ENCODE measurements at regions of chr10 and their contacts with region 1.

Region 1: DNA sequence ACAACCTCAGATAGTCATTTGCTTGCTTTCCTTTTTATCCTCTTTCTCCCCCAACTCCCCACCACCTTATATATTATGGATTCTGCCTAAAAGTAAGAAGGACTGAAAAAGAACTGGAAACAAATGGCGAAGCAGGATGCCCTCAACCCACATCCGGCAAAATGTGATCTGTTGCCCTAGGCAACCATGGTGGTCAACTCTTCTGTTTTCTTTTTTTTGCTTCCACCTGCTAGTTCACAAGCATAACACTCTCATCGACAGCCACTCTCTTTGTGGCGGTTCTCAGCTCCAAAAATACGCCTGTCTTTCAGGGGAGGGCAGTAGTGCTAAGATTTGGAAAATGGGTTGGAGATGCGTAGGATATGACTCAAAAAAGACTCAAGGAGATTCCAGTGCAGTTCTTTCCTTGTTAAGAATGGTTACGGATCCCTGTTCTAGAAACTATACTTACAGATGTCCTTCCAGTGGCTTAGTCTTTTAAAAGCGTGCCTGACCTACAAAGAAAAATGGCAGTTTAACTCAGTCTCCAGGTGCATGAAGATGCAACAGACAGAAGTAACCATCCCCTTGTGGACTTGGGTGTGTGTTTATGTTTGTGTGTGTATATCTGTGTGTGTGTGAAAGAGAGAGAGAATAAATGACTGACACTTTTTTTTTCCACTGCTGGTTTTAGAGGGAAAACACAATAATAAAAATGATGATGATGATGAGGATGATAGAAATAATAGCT is 10.7 kb downstream of the APBB1IP start:
- DNase-seq: peak; percentile 79
- H3K4me3 Mint-ChIP-seq: peak overlapping the region; percentile 68
- H3K27ac Mint-ChIP-seq: peak overlapping the region; percentile 93
- H3K4me1 Mint-ChIP-seq: peaks cover 67% of the 10 kb centered on the region
- H3K27me3 Mint-ChIP-seq: no peaks in the 10 kb centered on the region

Region 2: DNA sequence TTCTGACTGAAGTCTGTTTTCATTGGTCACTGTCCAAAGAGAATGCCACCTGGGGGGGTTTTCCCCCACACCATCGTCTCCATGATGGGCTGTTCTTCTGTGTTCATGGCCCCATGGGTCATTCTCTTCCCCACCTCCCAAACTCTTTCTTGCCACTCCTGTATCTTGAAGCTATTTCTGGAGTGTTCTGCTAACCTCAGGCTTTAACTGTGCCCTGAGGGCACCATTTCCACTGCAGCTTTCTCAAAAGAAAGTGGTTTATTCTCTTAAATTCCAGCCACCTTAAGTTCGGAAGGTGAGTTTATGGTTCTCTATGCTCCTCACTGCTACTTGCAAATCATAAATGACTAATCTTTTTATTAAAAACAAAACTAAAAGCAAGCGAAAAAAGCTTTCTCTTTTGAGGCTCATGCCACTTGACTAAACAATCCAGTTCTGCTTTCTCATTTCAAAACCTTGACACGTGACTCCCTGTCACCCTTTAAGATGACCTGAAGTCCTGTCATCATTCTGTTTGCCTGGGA is 18.2 kb before region 1 on chr10:
- intact Hi-C with region 1: loop called (anchors 1 kb)
- DNase-seq: peak; percentile 43
- H3K4me3 Mint-ChIP-seq: peak overlapping the region; percentile 57
- H3K27ac Mint-ChIP-seq: peak overlapping the region; percentile 81
- H3K4me1 Mint-ChIP-seq: peaks cover 16% of the 10 kb centered on the region
- H3K27me3 Mint-ChIP-seq: peaks cover 3% of the 10 kb centered on the region

Region 3: GRCh38 chr10:26467639-26468038 is 18.8 kb after region 1 on chr10:
- intact Hi-C with region 1: loop called (anchors 1 kb)
- DNase-seq: no peak
- H3K4me3 Mint-ChIP-seq: peak overlapping the region; percentile 15
- H3K27ac Mint-ChIP-seq: peak overlapping the region; percentile 42
- H3K4me1 Mint-ChIP-seq: peaks cover 62% of the 10 kb centered on the region
- H3K27me3 Mint-ChIP-seq: no peaks in the 10 kb centered on the region

Region 4: GRCh38 chr10:26479766-26480492 is 31.1 kb after region 1 on chr10:
- intact Hi-C with region 1: loop called (anchors 1 kb)
- DNase-seq: peak; percentile 29
- H3K4me3 Mint-ChIP-seq: peak overlapping the region; percentile 73
- H3K27ac Mint-ChIP-seq: peak overlapping the region; percentile 94
- H3K4me1 Mint-ChIP-seq: peaks cover 68% of the 10 kb centered on the region
- H3K27me3 Mint-ChIP-seq: no peaks in the 10 kb centered on the region

Region 5: DNA sequence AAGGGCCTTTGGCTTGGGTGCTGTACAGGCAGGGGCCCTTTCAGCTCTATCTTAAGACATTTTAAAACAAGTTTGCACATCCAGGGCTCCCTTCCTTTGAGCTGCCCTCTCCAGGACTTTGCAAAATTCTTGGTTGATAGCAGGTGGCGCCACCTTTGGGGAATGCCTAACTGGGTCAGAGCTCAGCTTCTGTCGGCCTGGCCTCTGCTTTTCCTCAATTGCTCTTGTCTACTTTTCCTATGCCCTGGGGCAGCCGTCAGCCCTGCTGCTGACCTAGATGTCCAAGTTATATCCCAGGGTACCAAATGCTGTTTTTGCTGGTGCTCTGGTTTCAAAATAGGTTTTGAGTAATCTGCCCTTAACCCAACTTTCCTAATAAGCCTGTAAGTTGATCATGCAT is 55.0 kb after region 1 on chr10:
- intact Hi-C with region 1: no loop called
- DNase-seq: no peak
- H3K4me3 Mint-ChIP-seq: no peak overlapping the region
- H3K27ac Mint-ChIP-seq: no peak overlapping the region
- H3K4me1 Mint-ChIP-seq: no peaks in the 10 kb centered on the region
- H3K27me3 Mint-ChIP-seq: no peaks in the 10 kb centered on the region

Region 6: DNA sequence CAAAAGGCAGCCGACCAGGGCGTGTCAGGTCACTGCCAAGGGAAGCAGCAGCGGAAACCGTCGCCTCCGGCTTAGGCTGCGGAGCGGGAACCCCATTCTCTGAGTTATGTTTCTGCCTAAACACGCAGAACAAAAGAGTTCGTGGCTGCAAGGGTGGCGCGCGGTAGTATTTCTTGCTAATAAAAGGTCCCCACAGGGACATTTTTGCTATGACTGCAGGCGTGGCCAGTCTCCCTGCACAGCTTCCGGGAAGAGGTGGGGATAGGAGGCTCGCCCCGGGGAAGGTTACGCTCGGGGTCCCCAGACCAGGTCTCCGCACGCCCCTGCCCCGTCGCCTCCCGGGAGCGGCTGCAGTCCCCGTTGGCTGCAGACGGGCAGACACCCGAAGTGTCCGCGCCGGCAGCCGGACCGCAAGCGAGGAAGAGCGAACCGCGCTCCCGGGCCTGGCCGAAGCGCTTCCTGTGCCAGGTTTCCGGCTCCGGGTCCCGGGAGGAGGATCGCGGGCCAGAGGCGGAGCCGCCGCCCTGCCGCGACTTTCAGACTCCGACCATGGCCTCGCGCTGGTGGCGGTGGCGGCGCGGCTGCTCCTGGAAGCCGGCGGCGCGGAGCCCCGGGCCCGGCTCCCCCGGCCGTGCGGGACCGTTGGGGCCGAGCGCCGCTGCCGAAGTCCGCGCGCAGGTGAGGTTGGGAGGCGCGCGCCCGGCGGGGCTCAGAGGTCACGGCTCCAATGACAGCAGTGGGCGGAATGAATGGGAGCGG is 248.5 kb after region 1 on chr10 and contains the start of gene PDSS1:
- intact Hi-C with region 1: loop called (anchors 5 kb)
- DNase-seq: peak; percentile 64
- H3K4me3 Mint-ChIP-seq: peak within 1 kb of the TSS; percentile 100
- H3K27ac Mint-ChIP-seq: peak within 1 kb of the TSS; percentile 94
- H3K4me1 Mint-ChIP-seq: peaks cover 31% of the 10 kb centered on the region
- H3K27me3 Mint-ChIP-seq: no peaks in the 10 kb centered on the region
- total RNA-seq, gene PDSS1: 39.3 and 43.1 TPM in 2 replicates

Region 7: GRCh38 chr10:27099916-27100812 is 651.3 kb after region 1 on chr10 and contains the start of gene ANKRD26:
- intact Hi-C with region 1: loop called (anchors 5 kb)
- DNase-seq: peak; percentile 96
- H3K4me3 Mint-ChIP-seq: peak within 1 kb of the TSS; percentile 86
- H3K27ac Mint-ChIP-seq: peak within 1 kb of the TSS; percentile 98
- H3K4me1 Mint-ChIP-seq: peaks cover 43% of the 10 kb centered on the region
- H3K27me3 Mint-ChIP-seq: no peaks in the 10 kb centered on the region
- total RNA-seq, gene ANKRD26: 4.3 and 7.0 TPM in 2 replicates

Measured in activated T-helper 1 cell treated with anti-CD3 and anti-CD28 coated beads, Interleukin-12 subunit alpha, Interleukin-12 subunit beta, Interleukin-2, Interleukin-4 antibody, amounts not matched to agents 30 ng/mL and 10 ng/mL and 1 ng/mL, durations not matched to agents 14 hours and 24 hours and 36 hours (primary cell).